Activated naive CD4-positive, alpha-beta T cell treated with anti-CD3 and anti-CD28 coated beads, Interleukin-2, amount 10 ng/mL, durations not matched to agents 7 days and 5 days (primary cell): ENCODE measurements at regions of chr2 and their contacts with region 1.

Region 1: DNA sequence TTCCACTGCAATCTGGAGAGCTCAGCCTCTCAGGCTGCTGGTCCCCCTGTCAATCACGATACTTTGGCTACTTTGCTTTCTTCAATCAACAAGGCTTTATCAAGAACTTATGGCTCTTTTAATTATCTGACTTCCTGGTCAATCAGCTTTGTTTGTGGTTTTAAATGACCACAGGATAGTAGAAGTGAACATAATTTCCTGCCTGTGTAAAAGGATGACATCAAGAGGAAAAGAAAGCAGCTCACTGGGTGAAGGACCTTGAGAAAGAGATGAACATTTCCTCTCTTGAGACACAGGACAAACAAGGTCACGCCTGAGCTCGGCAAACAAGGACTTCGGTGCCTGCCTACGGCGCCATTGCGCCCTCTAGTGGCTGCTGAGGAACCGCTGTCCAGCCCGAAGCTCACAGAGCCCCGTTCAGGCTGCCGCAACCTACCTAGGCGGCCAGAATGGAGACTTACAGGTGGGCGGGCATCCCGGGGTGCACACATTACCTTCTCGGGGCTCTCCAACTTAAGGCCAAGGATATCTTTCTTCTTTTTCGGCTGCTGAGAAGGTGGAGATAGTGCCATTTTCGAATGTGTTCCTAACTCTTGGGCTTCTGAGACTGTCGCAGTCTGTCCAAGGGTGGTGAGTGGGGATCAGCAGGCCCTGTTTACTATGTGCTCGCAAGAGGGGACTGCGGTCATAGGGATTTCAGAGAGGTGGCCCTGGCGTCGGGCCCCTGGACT is 54.0 kb downstream of the IL1RL2 start:
- DNase-seq: peak; percentile 90
- H3K4me3 Mint-ChIP-seq: no peak overlapping the region
- H3K27ac Mint-ChIP-seq: peak overlapping the region; percentile 26
- H3K4me1 Mint-ChIP-seq: peaks cover 28% of the 10 kb centered on the region
- H3K27me3 Mint-ChIP-seq: no peaks in the 10 kb centered on the region

Region 2: DNA sequence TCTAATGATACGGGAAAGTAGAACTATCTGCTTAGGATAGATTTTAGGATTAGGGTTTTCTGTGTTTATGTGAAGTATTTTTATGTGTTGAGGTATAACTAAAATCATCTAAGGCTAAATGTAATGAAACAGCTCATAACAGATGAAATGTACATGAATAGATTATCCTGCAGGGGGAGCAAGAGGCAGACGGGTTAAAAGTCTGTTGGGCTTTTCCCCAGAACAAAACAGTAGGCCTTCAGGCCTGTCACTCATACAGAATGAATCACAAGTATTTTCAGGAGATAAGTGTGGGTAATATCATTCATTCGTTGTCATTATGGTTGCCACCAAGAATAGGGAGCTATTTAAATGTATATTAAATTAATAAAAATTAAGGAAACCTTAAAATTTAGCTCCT is 356.9 kb before region 1 on chr2:
- CTCF ChIA-PET with region 1: interaction called, 34 read pairs
- DNase-seq: peak; percentile 31
- H3K4me3 Mint-ChIP-seq: no peak overlapping the region
- H3K27ac Mint-ChIP-seq: no peak overlapping the region
- H3K4me1 Mint-ChIP-seq: no peaks in the 10 kb centered on the region
- H3K27me3 Mint-ChIP-seq: no peaks in the 10 kb centered on the region

Region 3: DNA sequence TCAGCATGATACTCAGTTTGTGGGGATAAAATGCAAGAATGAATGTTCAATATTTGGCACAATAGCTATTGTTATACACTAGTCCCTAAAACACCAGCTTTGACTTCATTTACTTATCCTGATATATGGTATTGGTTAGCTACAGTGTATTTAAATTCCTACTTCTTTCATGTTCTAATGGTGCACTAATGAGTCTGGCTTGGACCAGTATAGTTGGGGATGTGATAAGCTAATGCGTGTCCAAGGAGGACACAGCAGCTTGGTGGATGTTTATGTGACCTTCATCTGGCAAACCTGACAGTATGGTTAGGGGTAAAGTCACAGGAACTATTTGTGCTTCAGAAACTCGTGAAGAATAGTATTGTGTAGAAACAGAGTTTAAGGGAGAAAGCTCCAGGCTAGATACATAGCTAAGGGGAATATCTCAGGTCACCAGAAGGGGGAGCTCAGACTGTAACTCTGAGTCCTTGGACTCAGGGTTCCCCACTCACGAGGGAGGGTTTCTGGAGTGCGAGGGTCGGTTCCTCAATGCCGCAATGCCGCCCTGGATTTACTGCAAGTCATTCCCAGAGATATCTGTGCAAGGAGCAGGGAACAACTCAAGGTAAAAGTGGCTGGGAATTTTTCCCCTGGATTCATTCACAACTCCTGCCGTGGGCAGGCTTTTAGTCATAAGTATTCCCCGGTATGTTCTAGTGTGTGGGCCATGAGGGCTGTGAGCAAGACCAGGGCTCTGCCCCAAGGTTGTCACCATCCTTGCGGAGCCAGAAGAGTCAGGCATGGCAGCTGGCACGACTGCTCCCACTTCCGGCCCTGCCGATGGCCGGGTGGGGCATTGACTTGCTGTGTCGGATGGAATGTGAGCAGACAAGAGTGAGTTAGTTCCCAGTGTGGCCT is 234.6 kb before region 1 on chr2:
- CTCF ChIA-PET with region 1: interaction called, 52 read pairs
- DNase-seq: peak; percentile 44
- H3K4me3 Mint-ChIP-seq: no peak overlapping the region
- H3K27ac Mint-ChIP-seq: no peak overlapping the region
- H3K4me1 Mint-ChIP-seq: peaks cover 5% of the 10 kb centered on the region
- H3K27me3 Mint-ChIP-seq: peaks cover 7% of the 10 kb centered on the region

Region 4: GRCh38 chr2:102020596-102021181 is 220.1 kb before region 1 on chr2:
- CTCF ChIA-PET with region 1: interaction called, 73 read pairs
- DNase-seq: peak; percentile 88
- H3K4me3 Mint-ChIP-seq: no peak overlapping the region
- H3K27ac Mint-ChIP-seq: no peak overlapping the region
- H3K4me1 Mint-ChIP-seq: peaks cover 11% of the 10 kb centered on the region
- H3K27me3 Mint-ChIP-seq: no peaks in the 10 kb centered on the region

Region 5: GRCh38 chr2:102185347-102185746 is 55.5 kb before region 1 on chr2:
- CTCF ChIA-PET with region 1: interaction called, 12 read pairs
- DNase-seq: peak; percentile 23
- H3K4me3 Mint-ChIP-seq: no peak overlapping the region
- H3K27ac Mint-ChIP-seq: no peak overlapping the region
- H3K4me1 Mint-ChIP-seq: peaks cover 32% of the 10 kb centered on the region
- H3K27me3 Mint-ChIP-seq: peaks cover 33% of the 10 kb centered on the region

Region 6: GRCh38 chr2:102200539-102200938 is 40.3 kb before region 1 on chr2:
- CTCF ChIA-PET with region 1: no interaction called
- DNase-seq: no peak
- H3K4me3 Mint-ChIP-seq: no peak overlapping the region
- H3K27ac Mint-ChIP-seq: no peak overlapping the region
- H3K4me1 Mint-ChIP-seq: peaks cover 10% of the 10 kb centered on the region
- H3K27me3 Mint-ChIP-seq: peaks cover 9% of the 10 kb centered on the region

Region 7: GRCh38 chr2:102331311-102331980 is 90.6 kb after region 1 on chr2:
- CTCF ChIA-PET with region 1: no interaction called
- DNase-seq: no peak
- H3K4me3 Mint-ChIP-seq: no peak overlapping the region
- H3K27ac Mint-ChIP-seq: no peak overlapping the region
- H3K4me1 Mint-ChIP-seq: peaks cover 3% of the 10 kb centered on the region
- H3K27me3 Mint-ChIP-seq: peaks cover 4% of the 10 kb centered on the region

Region 8: DNA sequence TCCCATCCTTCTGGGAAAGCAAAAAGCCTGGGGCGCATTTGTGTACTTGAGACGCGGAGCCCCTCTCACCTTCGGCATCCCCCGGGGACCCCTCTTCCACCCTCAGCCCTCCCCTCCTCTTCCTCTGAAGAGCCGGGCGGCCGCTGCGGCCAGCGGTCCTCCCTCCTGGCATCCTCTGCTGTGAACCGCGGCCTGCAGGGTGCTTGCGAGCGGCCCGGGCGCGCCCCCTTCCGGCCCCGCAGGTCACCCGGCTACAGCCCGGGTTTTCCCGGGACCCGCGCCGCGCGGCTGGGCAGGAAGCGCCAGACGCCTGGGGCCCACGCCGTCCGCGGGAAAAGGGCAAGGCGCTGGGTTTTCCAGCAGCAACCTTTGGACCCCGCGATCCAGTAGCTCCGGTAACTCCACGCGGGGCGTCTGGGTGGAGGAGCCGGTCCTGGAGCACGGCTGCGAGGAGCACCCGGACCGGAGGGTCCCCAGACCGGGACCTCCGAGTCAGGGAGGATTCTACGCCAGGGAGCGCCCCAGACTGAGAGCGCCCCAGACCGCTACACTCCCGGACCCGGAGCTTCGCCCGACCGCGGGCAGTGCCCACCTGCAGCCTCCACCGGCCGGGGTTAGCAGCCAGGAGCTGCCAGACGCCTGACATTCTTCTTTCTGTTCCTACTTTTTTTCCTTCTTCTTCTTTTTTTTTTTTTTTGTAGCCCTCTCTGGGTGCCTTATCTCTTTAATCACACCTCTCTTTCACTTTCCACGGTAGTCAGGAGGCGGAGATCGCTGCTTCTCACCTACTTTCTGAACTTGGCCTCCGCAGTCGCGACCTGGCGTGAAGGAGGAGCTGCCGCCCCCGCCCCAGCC is 114.9 kb after region 1 on chr2 and contains the start of gene IL18R1:
- CTCF ChIA-PET with region 1: interaction called, 20 read pairs
- DNase-seq: peak; percentile 80
- H3K4me3 Mint-ChIP-seq: peak within 1 kb of the TSS; percentile 100
- H3K27ac Mint-ChIP-seq: peak within 1 kb of the TSS; percentile 95
- H3K4me1 Mint-ChIP-seq: peaks cover 49% of the 10 kb centered on the region
- H3K27me3 Mint-ChIP-seq: peaks cover 4% of the 10 kb centered on the region

Region 9: DNA sequence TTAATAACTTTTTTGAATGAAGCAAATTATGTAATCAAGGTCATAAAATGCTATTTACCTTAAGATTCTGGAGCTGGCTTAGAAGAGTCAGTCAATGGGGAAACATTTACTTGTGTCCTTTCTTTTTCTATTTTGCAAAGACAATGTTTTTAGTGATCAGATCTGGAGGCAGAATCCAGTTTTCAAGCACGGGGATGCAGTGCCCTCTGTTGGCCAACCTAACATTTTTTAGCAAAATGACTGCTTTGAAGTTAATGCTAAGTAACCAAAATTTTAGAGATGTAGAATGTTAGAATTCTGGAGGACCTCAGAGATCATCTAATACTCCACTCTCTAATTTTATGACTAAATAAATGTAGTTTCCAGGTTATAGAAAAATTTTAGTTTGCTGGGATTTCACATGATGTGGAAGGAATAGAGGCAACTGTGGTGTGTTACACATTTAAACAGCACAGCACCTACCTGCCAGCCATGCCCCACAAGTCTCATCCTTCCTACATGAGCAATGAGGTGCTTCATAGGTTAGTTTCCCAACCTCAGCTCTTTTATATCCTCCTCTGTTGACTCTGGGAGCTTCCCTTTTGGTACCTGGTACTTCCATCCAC is 208.7 kb after region 1 on chr2:
- CTCF ChIA-PET with region 1: interaction called, 55 read pairs
- DNase-seq: peak; percentile 82
- H3K4me3 Mint-ChIP-seq: no peak overlapping the region
- H3K27ac Mint-ChIP-seq: no peak overlapping the region
- H3K4me1 Mint-ChIP-seq: peaks cover 15% of the 10 kb centered on the region
- H3K27me3 Mint-ChIP-seq: no peaks in the 10 kb centered on the region